ENCODE measurements at regions of chr12 and their contacts with region 1.

Region 1: GRCh38 chr12:6921996-6922946 is 5.5 kb upstream of the ATN1 start:
- DNase-seq: no peak
- H3K4me3 ChIP-seq: no peak overlapping the region
- H3K27ac ChIP-seq: no peak overlapping the region
- H3K4me1 ChIP-seq: peaks cover 10% of the 10 kb centered on the region
- H3K27me3 ChIP-seq: no peaks in the 10 kb centered on the region
- CTCF ChIP-seq: no peak

Region 2: GRCh38 chr12:7092229-7092985 is 170.1 kb after region 1 on chr12 and contains the start of gene C1R:
- intact Hi-C with region 1: loop called (anchors 5 kb)
- DNase-seq: peak; percentile 80
- H3K4me3 ChIP-seq: peak within 1 kb of the TSS; percentile 44
- H3K27ac ChIP-seq: peak within 1 kb of the TSS; percentile 1
- H3K4me1 ChIP-seq: no peaks in the 10 kb centered on the region
- H3K27me3 ChIP-seq: no peaks in the 10 kb centered on the region
- CTCF ChIP-seq: peak; percentile 91
- total RNA-seq, gene C1R: 40.1 to 104 TPM